KBM-7 (cell line): ENCODE measurements at regions of chrX and their contacts with region 1.

Region 1: GRCh38 chrX:65985922-65986588 is 53.8 kb downstream of the VSIG4 start:
- DNase-seq: peak; percentile 93

Region 2: GRCh38 chrX:65745992-65746391 is 240.1 kb before region 1 on chrX:
- in situ Hi-C with region 1: loop called (anchors 25 kb)
- DNase-seq: peak; percentile 63